ENCODE measurements at regions of chr22 and their contacts with region 1.

Region 1: GRCh38 chr22:23849009-23850006 is 8.4 kb upstream of the SLC2A11 start:
- DNase-seq: no peak
- H3K4me3 ChIP-seq: peak overlapping the region in 1 of 4 donors; percentile 25
- H3K27ac ChIP-seq: no peak overlapping the region
- H3K4me1 ChIP-seq: peaks cover 23 to 51% (median 26%) of the 10 kb centered on the region in 3 donors
- H3K27me3 ChIP-seq: peaks cover 0 to 36% (median 0%) of the 10 kb centered on the region in 4 donors
- CTCF ChIP-seq: peak; percentile 96 to 99 (median 98)
- POLR2A ChIP-seq: no peak

Region 2: DNA sequence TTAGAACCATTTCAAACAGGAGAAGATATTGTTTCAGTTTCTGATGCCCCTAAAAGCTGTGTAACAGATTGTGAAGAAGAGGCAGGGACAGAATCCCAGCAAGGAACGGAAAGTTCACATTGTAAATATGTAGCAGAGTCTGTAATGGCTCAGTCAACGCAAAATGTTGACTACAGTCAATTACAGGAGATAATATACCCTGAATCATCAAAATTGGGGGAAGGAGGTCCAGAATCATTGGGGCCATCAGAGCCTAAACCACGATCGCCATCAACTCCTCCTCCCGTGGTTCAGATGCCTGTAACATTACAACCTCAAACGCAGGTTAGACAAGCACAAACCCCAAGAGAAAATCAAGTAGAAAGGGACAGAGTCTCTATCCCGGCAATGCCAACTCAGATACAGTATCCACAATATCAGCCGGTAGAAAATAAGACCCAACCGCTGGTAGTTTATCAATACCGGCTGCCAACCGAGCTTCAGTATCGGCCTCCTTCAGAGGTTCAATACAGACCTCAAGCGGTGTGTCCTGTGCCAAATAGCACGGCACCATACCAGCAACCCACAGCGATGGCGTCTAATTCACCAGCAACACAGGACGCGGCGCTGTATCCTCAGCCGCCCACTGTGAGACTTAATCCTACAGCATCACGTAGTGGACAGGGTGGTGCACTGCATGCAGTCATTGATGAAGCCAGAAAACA is 310.0 kb before region 1 on chr22:
- intact Hi-C with region 1: loop called (anchors 10 kb)
- DNase-seq: peak; percentile 20
- H3K4me3 ChIP-seq: no peak overlapping the region
- H3K27ac ChIP-seq: no peak overlapping the region
- H3K4me1 ChIP-seq: peaks cover 0 to 21% (median 0%) of the 10 kb centered on the region in 3 donors
- H3K27me3 ChIP-seq: peaks cover 0 to 52% (median 0%) of the 10 kb centered on the region in 4 donors
- CTCF ChIP-seq: peak; percentile 78 to 96 (median 93)
- POLR2A ChIP-seq: no peak

Region 3: DNA sequence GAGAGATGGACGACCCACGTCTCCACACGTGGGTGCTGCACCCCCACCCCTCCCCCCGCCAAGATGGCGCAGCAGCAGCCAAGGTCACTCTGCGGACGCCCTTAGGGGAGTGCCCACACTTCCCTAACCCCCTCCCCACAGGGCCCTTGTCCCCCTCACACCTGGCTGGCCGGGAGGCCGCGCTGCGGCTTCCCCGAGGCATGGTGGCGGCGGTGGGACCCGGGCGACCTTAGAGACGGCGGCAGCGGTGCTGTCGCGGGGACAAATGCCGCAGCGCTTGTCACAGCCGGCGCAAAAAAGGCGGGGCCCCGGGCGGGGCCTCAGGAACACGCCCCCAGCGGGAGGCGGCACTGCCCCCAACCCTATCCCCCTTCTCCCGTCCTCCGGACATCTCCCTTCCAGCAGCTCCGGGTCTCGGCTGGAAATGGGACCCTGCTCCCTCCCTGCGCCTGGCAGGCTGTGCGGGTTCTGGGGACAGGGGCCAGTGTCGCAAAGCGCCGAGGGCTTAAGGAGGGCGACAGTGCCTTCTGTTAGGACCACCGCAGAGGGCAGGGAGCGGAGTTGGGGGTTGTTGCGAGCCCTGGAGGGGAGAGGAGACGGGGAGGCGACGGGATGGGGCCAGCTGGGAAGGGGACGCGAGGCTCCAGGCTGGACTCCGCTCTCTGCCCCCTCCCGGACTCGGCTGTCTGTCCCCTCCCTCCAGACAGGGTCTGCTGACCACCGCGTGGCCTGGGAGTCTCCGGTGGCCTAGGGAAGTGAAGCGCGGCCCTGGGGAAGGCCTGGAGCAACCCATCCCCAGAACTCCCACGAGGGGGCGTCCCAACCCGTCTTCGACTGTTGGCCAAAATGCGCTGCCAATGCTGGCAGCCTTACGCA is 81.4 kb before region 1 on chr22 and contains the start of gene CHCHD10:
- intact Hi-C with region 1: loop called (anchors 5 kb)
- DNase-seq: no peak
- H3K4me3 ChIP-seq: peak within 1 kb of the TSS; percentile 57 to 84 (median 72)
- H3K27ac ChIP-seq: peak within 1 kb of the TSS; percentile 80 to 91 (median 89)
- H3K4me1 ChIP-seq: peaks cover 15 to 92% (median 39%) of the 10 kb centered on the region in 3 donors
- H3K27me3 ChIP-seq: no peaks in the 10 kb centered on the region
- CTCF ChIP-seq: peak; percentile 67 to 80 (median 72)
- POLR2A ChIP-seq: peak in 2 of 4 donors; percentile 52 to 79
- total RNA-seq, gene CHCHD10: 7.7 to 13.9 (median 10.4) TPM

Region 4: DNA sequence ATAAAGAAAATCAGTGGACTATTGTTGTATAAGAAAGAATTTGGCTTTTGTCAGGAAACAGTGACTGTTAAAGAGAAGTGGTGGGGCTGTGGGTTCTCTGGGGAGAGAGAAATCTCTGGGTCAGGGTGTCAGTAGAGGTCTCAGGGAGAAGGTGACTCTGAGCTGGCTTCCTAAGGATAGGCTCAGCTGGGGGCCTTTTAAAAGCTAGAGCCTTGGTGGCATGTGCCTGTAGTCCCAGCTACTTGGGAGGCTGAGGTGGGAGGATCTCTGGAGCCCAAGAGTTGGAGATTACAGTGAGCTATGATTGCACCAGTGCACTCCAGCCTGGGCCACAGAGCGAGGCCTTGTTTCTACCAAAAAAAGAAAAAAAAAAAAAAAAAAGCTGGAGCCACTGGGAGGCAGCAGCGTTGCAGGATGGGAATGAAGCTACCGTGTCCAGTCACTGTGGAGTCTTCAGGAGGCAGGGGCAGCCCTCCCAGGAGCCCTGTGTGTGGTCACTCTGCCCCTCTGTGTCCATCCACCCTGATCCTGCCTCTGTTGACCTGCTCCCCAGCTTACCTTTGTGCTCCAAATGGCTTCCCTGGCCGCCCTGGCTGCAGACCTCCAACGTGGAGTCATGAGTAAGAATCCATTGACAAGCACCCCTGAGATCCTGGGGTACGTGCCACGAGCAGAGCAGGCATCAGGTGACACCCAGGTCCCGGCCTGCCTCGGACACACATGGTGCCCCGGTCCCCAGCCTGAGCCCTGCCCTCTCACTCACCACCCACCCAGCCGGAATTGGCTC is 39.5 kb after region 1 on chr22:
- intact Hi-C with region 1: no loop called
- DNase-seq: no peak
- H3K4me3 ChIP-seq: no peak overlapping the region
- H3K27ac ChIP-seq: peak overlapping the region in 3 of 4 donors; percentile 30 to 75 (median 69)
- H3K4me1 ChIP-seq: peaks cover 11 to 34% (median 13%) of the 10 kb centered on the region in 3 donors
- H3K27me3 ChIP-seq: no peaks in the 10 kb centered on the region
- CTCF ChIP-seq: peak in 1 of 6 experiments; percentile 13
- POLR2A ChIP-seq: no peak

Measured in esophagus squamous epithelium (tissue), 5 donors.